Calu3 (cell line): ENCODE measurements at regions of chr5 and their contacts with region 1.

Region 1: DNA sequence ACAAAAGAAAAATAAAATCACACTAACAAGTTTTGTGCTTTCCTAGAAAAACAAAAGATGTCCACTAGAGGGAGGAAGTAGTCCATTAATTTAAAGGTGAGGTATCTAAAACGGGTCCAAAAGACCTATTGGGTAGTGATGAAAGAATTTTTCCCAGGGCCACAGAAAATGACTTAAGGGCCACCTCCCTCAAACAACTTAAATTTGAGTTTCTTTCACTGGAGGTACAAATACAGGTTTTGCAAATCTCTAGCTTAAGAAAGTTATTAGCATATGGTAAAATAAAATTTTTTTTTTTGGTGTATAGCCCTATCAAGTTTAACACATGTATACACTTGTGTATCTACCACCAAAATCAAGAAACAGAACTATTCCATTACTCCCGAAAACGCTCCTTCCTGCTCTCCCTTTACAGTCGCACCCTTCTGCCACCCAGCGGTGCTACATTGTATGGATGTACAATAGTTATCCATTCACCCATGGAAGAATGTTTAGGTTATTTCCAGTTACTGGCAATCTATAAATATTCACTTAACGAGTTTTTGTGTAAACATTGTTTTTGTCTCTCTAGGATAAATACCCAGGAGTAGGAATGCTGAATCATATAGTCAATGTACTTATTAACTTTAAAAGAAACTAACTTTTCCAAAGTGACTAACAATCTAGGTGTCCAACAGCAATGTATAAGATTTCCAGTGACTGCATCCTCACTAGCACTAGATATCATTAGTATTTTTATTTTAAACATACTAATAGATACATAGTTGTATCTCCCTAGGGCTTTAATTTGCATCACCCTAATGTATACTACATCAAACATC is 21.9 kb downstream of the DEPDC1B start:
- DNase-seq: no peak
- H3K4me3 Mint-ChIP-seq: peak overlapping the region; percentile 45
- H3K27ac Mint-ChIP-seq: peak overlapping the region; percentile 35
- H3K4me1 Mint-ChIP-seq: peaks cover 77% of the 10 kb centered on the region
- H3K27me3 Mint-ChIP-seq: no peaks in the 10 kb centered on the region
- CTCF ChIP-seq: peak; percentile 54

Region 2: DNA sequence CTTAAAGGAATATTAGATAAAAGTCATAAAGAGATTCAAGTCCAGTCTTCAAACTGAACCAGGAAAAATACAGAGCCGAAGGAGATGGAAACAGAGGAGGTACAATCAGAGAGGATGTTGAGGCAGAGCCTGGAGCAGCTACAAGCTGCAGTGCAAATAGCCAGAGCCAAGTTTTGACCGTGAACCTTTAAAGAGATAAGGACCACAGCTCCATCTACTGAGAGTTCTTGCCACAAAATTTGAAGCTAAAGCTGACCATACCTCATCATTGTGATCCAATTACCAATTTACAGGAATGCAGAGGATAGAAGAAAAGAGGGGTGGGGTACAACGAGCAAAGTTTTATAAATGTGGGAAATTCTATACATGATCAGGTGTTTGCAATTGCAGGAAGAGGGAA is 32.3 kb after region 1 on chr5:
- CTCF ChIA-PET with region 1: interaction called, 3 read pairs
- intact Hi-C with region 1: loop called (anchors 5 kb)
- DNase-seq: no peak
- H3K4me3 Mint-ChIP-seq: no peak overlapping the region
- H3K27ac Mint-ChIP-seq: no peak overlapping the region
- H3K4me1 Mint-ChIP-seq: peaks cover 12% of the 10 kb centered on the region
- H3K27me3 Mint-ChIP-seq: no peaks in the 10 kb centered on the region
- CTCF ChIP-seq: no peak

Region 3: GRCh38 chr5:60883229-60883628 is 205.2 kb after region 1 on chr5:
- CTCF ChIA-PET with region 1: interaction called, 6 read pairs
- intact Hi-C with region 1: loop called (anchors 1 kb)
- DNase-seq: peak; percentile 3
- H3K4me3 Mint-ChIP-seq: no peak overlapping the region
- H3K27ac Mint-ChIP-seq: no peak overlapping the region
- H3K4me1 Mint-ChIP-seq: no peaks in the 10 kb centered on the region
- H3K27me3 Mint-ChIP-seq: no peaks in the 10 kb centered on the region
- CTCF ChIP-seq: no peak